IMR-90 (cell line): ENCODE measurements at regions of chr2 and their contacts with region 1.

Region 1: GRCh38 chr2:175030380-175031271 is 25.4 kb upstream of the CHN1 start:
- DNase-seq: peak; percentile 58
- ATAC-seq: peak; percentile 96
- H3K4me3 ChIP-seq: no peak overlapping the region
- H3K27ac ChIP-seq: no peak overlapping the region
- H3K4me1 ChIP-seq: peaks cover 2% of the 10 kb centered on the region; the same call in 1 of the 2 replicates
- H3K27me3 ChIP-seq: no peaks in the 10 kb centered on the region
- CTCF ChIP-seq: peak; percentile 51
- POLR2A ChIP-seq: no peak
- RAD21 ChIP-seq: peak; percentile 71

Region 2: DNA sequence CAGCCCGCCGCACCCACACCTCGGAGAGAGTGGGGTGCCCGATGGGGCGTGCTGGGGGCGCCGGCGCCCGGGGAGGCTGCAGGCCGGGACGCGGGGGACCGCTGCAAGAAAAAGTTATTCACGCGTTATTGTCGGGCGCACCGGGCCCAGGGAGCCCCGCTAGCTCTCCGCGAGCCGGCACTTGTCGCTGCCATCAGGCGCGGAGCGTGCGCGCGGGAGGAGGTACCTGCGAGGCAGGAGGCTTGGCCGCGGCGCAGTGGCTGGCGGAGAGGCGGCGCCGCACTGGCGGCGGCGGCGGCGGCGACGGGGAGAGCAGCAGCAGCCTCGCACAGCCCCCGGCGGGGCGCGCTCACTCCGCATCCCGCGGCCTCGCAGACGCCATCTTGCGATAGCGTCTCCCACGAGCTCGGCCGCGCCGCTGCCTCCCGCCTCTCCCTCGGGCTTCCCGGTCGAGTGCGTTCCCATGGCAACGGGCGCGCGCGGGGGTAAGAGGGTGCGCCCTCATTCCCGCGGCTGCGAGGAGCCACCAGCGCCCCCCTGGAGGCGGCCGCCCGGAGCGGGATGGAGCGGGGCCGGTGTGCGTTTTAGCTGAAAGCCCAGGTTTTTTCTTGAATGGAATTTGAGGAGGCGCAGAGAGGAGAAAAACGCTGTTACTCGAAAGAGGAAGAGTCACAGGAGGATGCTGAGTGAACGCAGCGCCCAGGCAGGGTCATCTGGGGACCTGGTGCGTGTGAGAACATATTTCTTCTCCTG is 25.5 kb before region 1 on chr2 and contains the start of gene CHN1:
- CTCF ChIA-PET with region 1: no interaction called
- POLR2A ChIA-PET with region 1: no interaction called
- dilution Hi-C with region 1: no loop called
- in situ Hi-C with region 1: no loop called
- intact Hi-C with region 1: no loop called
- DNase-seq: peak; percentile 69
- ATAC-seq: peak; percentile 95
- H3K4me3 ChIP-seq: peak within 1 kb of the TSS; percentile 66
- H3K27ac ChIP-seq: no peak within 1 kb of the TSS; the same call in 1 of the 2 replicates
- H3K4me1 ChIP-seq: no peaks in the 10 kb centered on the region
- H3K27me3 ChIP-seq: peaks cover 22% of the 10 kb centered on the region
- CTCF ChIP-seq: 0 out of 2 replicates have a peak, but pooled peaks have one; percentile 4
- POLR2A ChIP-seq: no peak
- RAD21 ChIP-seq: 0 out of 2 replicates have a peak, but pooled peaks have one; percentile 8
- total RNA-seq, gene CHN1: 54.4 and 58.4 TPM in 2 replicates

Region 3: DNA sequence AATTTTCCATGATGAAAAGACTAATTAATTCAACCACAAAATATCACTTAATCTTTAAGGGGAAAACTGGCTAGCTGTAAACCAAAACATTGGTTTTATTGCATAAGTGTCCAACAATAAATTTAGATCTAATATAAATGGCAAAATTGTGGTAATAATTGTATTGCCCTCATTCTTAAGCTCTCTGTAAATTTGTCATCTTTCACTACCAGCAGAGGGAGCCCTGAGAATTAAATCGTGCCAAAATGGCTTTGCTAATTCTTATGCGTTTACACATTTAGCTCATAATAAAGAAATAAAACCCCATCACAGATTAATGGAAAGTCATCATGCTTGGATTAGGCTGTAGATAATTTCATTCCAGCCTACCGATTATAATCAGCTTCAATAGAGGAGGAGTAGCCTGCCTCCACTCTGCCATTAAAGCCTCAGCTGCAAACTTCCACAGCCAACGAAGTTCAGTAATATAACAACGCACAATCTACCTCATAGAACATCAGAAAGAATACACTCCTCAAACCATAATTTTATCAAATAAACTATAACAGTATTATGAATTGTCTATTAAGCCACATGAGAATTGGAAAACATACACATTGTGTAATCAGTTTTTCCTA is 220.9 kb after region 1 on chr2:
- CTCF ChIA-PET with region 1: no interaction called
- POLR2A ChIA-PET with region 1: no interaction called
- dilution Hi-C with region 1: no loop called
- in situ Hi-C with region 1: loop called (anchors 25 kb)
- intact Hi-C with region 1: no loop called
- DNase-seq: peak; percentile 40
- ATAC-seq: peak; percentile 62
- H3K4me3 ChIP-seq: no peak overlapping the region
- H3K27ac ChIP-seq: no peak overlapping the region
- H3K4me1 ChIP-seq: no peaks in the 10 kb centered on the region
- H3K27me3 ChIP-seq: peaks cover 9% of the 10 kb centered on the region
- CTCF ChIP-seq: peak; percentile 62
- POLR2A ChIP-seq: no peak
- RAD21 ChIP-seq: peak; percentile 37; the same call in 1 of the 2 replicates

Region 4: GRCh38 chr2:175904035-175904434 is 873.4 kb after region 1 on chr2:
- CTCF ChIA-PET with region 1: no interaction called
- POLR2A ChIA-PET with region 1: no interaction called
- dilution Hi-C with region 1: no loop called
- in situ Hi-C with region 1: no loop called
- intact Hi-C with region 1: no loop called
- DNase-seq: no peak
- ATAC-seq: no peak
- H3K4me3 ChIP-seq: no peak overlapping the region
- H3K27ac ChIP-seq: no peak overlapping the region
- H3K4me1 ChIP-seq: no peaks in the 10 kb centered on the region
- H3K27me3 ChIP-seq: 0 out of 2 replicates have a peak, but pooled peaks cover 1% of the 10 kb centered on the region
- CTCF ChIP-seq: no peak
- POLR2A ChIP-seq: no peak
- RAD21 ChIP-seq: no peak